ENCODE measurements at regions of chr17 and their contacts with region 1.

Region 1: DNA sequence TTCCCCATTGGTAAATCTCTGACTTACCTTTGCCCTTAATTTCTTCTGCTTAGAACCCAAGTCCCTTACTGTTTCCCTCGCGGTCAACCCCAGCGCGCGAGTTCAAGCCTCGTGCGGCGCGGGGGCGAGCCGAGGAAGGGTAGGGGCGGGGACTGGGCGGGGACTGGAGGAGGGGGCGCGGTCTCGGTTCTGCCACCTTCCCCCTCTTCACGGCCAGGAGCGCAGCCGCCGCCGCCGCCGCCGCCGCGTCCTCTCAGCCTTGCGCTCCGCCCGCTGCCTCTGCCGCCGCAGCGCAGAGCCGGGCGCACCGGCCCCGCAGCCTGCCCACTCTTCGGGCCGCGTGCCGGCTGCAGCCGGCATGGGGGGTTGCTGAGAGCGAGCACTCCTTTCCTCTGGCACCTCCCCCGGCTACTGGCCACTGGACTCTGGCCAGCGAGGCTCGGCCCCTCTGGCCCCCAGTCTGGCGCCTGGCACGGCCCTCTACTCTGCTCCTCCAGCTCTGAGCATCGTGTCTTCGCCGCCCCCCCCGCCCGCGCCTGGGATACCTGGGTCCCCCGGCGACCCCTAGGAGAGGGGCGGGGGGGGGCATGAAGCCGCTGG is at the start of gene RAPGEFL1:
- DNase-seq: peak; percentile 69
- H3K4me3 Mint-ChIP-seq: no peak within 1 kb of the TSS
- H3K27ac Mint-ChIP-seq: peak within 1 kb of the TSS; percentile 39
- H3K4me1 Mint-ChIP-seq: peaks cover 9% of the 10 kb centered on the region
- H3K27me3 Mint-ChIP-seq: no peaks in the 10 kb centered on the region
- total RNA-seq, gene RAPGEFL1: 11.6 and 12.3 TPM in 2 replicates

Region 2: GRCh38 chr17:40019140-40019991 is 158.0 kb before region 1 on chr17:
- intact Hi-C with region 1: loop called (anchors 10 kb)
- DNase-seq: no peak
- H3K4me3 Mint-ChIP-seq: no peak overlapping the region
- H3K27ac Mint-ChIP-seq: no peak overlapping the region
- H3K4me1 Mint-ChIP-seq: no peaks in the 10 kb centered on the region
- H3K27me3 Mint-ChIP-seq: no peaks in the 10 kb centered on the region

Measured in activated T-helper 2 cell treated with anti-CD3 and anti-CD28 coated beads, Interferon-gamma antibody, Interleukin-2, Interleukin-4, amounts not matched to agents 10 μg/mL and 5 μg/mL and 100 μg/mL, durations not matched to agents 14 hours and 24 hours and 36 hours (primary cell).